Heart right ventricle (tissue), 16 donors: ENCODE measurements at regions of chr7 and their contacts with region 1.

Region 1: GRCh38 chr7:158976849-158977593 is 120.7 kb downstream of the DYNC2I1 start:
- DNase-seq: peak; percentile 82 to 86
- ATAC-seq: peak; percentile 73 to 94 (median 83)
- H3K4me3 ChIP-seq: peak overlapping the region in 9 of 10 donors; percentile 20 to 55 (median 43)
- H3K27ac ChIP-seq: peak overlapping the region in 4 of 10 donors; percentile 36 to 57 (median 50)
- H3K4me1 ChIP-seq: peaks cover 0 to 15% (median 12%) of the 10 kb centered on the region in 9 donors
- H3K27me3 ChIP-seq: no peaks in the 10 kb centered on the region
- CTCF ChIP-seq: peak; percentile 78 to 91 (median 89)

Region 2: GRCh38 chr7:158695726-158696452 is 281.1 kb before region 1 on chr7:
- intact Hi-C with region 1: loop called in 9 of 10 experiments (anchors 1 to 10 kb)
- DNase-seq: peak in 1 of 2 donors; percentile 83
- ATAC-seq: peak; percentile 93 to 99 (median 98)
- H3K4me3 ChIP-seq: peak overlapping the region in 3 of 10 donors; percentile 2 to 28 (median 9)
- H3K27ac ChIP-seq: peak overlapping the region in 7 of 10 donors; percentile 8 to 60 (median 45)
- H3K4me1 ChIP-seq: peaks cover 0 to 12% (median 6%) of the 10 kb centered on the region in 9 donors
- H3K27me3 ChIP-seq: no peaks in the 10 kb centered on the region
- CTCF ChIP-seq: peak; percentile 31 to 83 (median 77)

Region 3: DNA sequence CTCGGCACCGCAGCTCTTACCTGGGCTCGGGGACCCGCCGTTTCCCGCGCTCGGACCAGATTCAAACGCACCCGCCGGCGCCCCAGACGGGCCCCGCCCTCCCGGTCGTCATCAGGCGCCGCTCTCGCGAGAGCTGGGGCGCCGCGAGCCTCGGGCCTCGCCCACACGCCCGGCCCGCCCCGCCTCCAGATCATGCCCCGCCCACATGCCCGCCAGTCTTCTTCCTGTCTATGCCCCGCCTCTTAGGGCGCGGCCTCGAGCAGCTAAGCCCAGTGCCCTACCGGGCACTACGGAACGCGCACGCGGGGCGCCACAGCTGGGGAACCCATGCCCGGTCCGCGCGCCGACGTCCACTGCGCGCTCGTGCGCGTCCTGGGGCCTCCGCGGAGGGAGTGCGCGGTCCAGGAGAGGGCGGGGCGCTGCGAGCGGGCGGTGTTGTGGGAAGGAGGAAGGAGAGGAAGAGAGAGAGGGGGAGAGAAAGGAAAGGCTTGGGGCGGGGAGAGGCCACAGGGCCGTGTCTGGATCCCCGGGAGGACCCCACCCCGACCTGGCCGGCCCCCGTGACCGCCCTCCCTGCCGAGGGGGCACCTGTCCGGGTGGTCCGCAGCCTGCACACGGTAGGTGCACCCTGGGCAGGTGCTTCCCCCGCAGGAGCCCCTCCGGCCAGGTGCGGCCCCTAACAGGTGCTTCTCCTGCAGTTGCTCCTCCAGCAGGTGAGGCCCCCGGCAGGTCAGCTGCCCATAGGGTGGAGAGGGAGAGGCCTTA is 272.1 kb before region 1 on chr7 and contains the start of gene NCAPG2:
- intact Hi-C with region 1: loop called in 1 of 10 experiments (anchors 10 kb)
- DNase-seq: peak; percentile 97 to 99
- ATAC-seq: peak; percentile 99
- H3K4me3 ChIP-seq: peak within 1 kb of the TSS; percentile 64 to 100 (median 89)
- H3K27ac ChIP-seq: peak within 1 kb of the TSS; percentile 34 to 96 (median 87)
- H3K4me1 ChIP-seq: peaks cover 3 to 21% (median 8%) of the 10 kb centered on the region in 9 donors
- H3K27me3 ChIP-seq: no peaks in the 10 kb centered on the region
- CTCF ChIP-seq: peak in 6 of 9 donors; percentile 21 to 44 (median 30)
- total RNA-seq, gene NCAPG2: 3.5 to 8.0 (median 4.6) TPM

Region 4: GRCh38 chr7:158891922-158892321 is 85.1 kb before region 1 on chr7:
- intact Hi-C with region 1: loop called in 1 of 10 experiments (anchors 10 kb)
- DNase-seq: no peak
- ATAC-seq: no peak
- H3K4me3 ChIP-seq: no peak overlapping the region
- H3K27ac ChIP-seq: no peak overlapping the region
- H3K4me1 ChIP-seq: peaks cover 0 to 6% (median 0%) of the 10 kb centered on the region in 9 donors
- H3K27me3 ChIP-seq: no peaks in the 10 kb centered on the region
- CTCF ChIP-seq: no peak

Region 5: GRCh38 chr7:158963771-158964241 is 13.2 kb before region 1 on chr7:
- intact Hi-C with region 1: no loop called
- DNase-seq: peak in 1 of 2 donors; percentile 41
- ATAC-seq: peak; percentile 51 to 92 (median 84)
- H3K4me3 ChIP-seq: no peak overlapping the region
- H3K27ac ChIP-seq: no peak overlapping the region
- H3K4me1 ChIP-seq: peaks cover 0 to 14% (median under 1%) of the 10 kb centered on the region in 9 donors
- H3K27me3 ChIP-seq: peaks cover 0 to 13% (median 6%) of the 10 kb centered on the region in 7 donors
- CTCF ChIP-seq: no peak